Activated CD4-positive, alpha-beta T cell treated with anti-CD3 and anti-CD28 coated beads for 36 hours (primary cell): ENCODE measurements at regions of chr14 and their contacts with region 1.

Region 1: DNA sequence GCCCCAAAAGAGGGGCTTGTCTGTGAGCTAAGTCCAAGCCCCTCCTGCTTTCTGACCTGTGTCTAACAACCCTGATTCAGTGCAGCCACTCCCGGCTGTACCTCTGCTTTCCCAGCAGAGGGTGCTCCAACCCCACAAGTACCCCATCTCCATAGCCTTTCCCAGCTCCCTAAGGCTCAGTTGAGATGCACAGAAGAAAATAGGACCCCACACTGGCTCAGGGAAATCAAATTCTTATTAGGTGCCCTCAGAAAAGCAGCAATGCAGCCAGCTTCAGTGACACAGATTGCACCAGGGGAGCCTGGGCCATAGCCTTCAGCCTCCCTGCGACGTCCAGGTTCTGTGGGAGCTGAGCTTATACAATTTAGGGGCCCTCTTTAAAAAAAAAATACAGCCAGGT is 49.9 kb downstream of the LRRC74A start:
- DNase-seq: peak; percentile 69
- ATAC-seq: peak; percentile 89
- H3K4me3 Mint-ChIP-seq: no peak overlapping the region
- H3K27ac Mint-ChIP-seq: no peak overlapping the region
- H3K4me1 Mint-ChIP-seq: no peaks in the 10 kb centered on the region
- H3K27me3 Mint-ChIP-seq: no peaks in the 10 kb centered on the region

Region 2: GRCh38 chr14:76761136-76761959 is 114.7 kb before region 1 on chr14 and contains the start of gene VASH1:
- CTCF ChIA-PET with region 1: no interaction called
- POLR2A ChIA-PET with region 1: no interaction called
- intact Hi-C with region 1: no loop called
- DNase-seq: peak; percentile 78
- ATAC-seq: peak; percentile 89
- H3K4me3 Mint-ChIP-seq: peak within 1 kb of the TSS; percentile 73
- H3K27ac Mint-ChIP-seq: peak within 1 kb of the TSS; percentile 11
- H3K4me1 Mint-ChIP-seq: peaks cover 8% of the 10 kb centered on the region
- H3K27me3 Mint-ChIP-seq: peaks cover 27% of the 10 kb centered on the region
- total RNA-seq, gene VASH1: 4.0 to 5.3 TPM

Region 3: DNA sequence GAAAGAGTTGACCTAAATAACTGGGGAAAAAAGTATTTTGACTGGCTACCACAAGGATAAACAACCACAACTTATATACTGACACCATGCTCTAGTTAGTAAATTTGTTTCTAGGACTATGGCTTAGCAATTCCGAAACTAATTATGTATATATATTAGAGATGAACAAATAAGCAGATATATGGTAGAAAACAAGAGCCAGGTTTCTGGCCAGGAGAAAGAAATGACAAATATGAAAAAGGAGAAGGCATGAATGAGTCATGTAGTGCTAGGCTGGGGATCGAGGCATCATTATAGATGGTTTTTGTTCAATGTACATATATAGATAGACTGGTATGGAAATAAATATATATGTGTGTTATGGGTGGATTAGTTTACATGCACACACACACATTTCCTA is 55.4 kb before region 1 on chr14:
- CTCF ChIA-PET with region 1: no interaction called
- POLR2A ChIA-PET with region 1: no interaction called
- intact Hi-C with region 1: no loop called
- DNase-seq: no peak
- ATAC-seq: peak; percentile 30
- H3K4me3 Mint-ChIP-seq: no peak overlapping the region
- H3K27ac Mint-ChIP-seq: no peak overlapping the region
- H3K4me1 Mint-ChIP-seq: no peaks in the 10 kb centered on the region
- H3K27me3 Mint-ChIP-seq: peaks cover 4% of the 10 kb centered on the region

Region 4: DNA sequence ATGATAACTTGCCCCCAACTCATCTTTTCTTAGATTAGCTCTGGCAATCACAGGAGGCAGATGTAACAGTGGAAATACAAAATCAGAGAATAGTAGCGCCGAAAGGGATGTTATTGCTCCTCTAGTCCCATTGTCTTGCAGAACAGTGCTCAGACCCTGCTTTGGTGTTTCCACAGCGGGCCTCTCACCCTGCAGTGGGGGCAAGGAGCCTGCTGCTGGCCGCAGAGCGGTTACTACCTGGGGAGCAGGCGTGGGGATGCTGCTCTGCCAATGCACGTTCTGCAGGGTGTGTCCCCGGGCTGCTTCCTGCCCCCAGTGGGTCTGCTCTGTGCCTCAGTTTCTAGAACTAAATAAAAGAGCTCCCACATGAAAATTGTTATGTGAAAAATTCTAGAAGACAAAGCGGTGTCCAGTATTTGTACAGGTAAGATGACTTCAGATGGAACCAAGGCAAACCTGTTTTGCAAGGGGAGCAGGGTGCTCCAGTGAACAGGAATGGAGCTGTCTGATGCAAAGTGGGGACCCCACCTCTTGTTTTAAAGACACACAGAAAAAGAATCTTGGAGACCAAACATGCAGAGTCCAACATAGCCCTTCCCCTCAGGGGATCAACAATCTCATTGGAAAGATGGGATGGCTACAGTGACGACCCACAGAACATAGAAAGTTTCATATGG is 14.4 kb before region 1 on chr14:
- CTCF ChIA-PET with region 1: interaction called, 14 read pairs
- POLR2A ChIA-PET with region 1: no interaction called
- intact Hi-C with region 1: no loop called
- DNase-seq: no peak
- ATAC-seq: no peak
- H3K4me3 Mint-ChIP-seq: no peak overlapping the region
- H3K27ac Mint-ChIP-seq: no peak overlapping the region
- H3K4me1 Mint-ChIP-seq: peaks cover 26% of the 10 kb centered on the region
- H3K27me3 Mint-ChIP-seq: peaks cover 5% of the 10 kb centered on the region

Region 5: GRCh38 chr14:76904740-76905438 is 28.8 kb after region 1 on chr14:
- CTCF ChIA-PET with region 1: interaction called, 19 read pairs
- POLR2A ChIA-PET with region 1: no interaction called
- intact Hi-C with region 1: loop called in 1 of 2 experiments (anchors 5 kb)
- DNase-seq: peak; percentile 94
- ATAC-seq: peak; percentile 97
- H3K4me3 Mint-ChIP-seq: no peak overlapping the region
- H3K27ac Mint-ChIP-seq: peak overlapping the region; percentile 80
- H3K4me1 Mint-ChIP-seq: peaks cover 31% of the 10 kb centered on the region
- H3K27me3 Mint-ChIP-seq: no peaks in the 10 kb centered on the region

Region 6: GRCh38 chr14:76918751-76919543 is 42.9 kb after region 1 on chr14:
- CTCF ChIA-PET with region 1: interaction called, 18 read pairs
- POLR2A ChIA-PET with region 1: no interaction called
- intact Hi-C with region 1: loop called in 1 of 2 experiments (anchors 5 kb)
- DNase-seq: peak; percentile 65
- ATAC-seq: no peak
- H3K4me3 Mint-ChIP-seq: no peak overlapping the region
- H3K27ac Mint-ChIP-seq: no peak overlapping the region
- H3K4me1 Mint-ChIP-seq: peaks cover 59% of the 10 kb centered on the region
- H3K27me3 Mint-ChIP-seq: no peaks in the 10 kb centered on the region

Region 7: GRCh38 chr14:77053046-77053841 is 177.2 kb after region 1 on chr14:
- CTCF ChIA-PET with region 1: interaction called, 25 read pairs
- POLR2A ChIA-PET with region 1: no interaction called
- intact Hi-C with region 1: loop called (anchors 1 kb)
- DNase-seq: peak; percentile 90
- ATAC-seq: peak; percentile 86
- H3K4me3 Mint-ChIP-seq: no peak overlapping the region
- H3K27ac Mint-ChIP-seq: peak overlapping the region; percentile 78
- H3K4me1 Mint-ChIP-seq: peaks cover 18% of the 10 kb centered on the region
- H3K27me3 Mint-ChIP-seq: no peaks in the 10 kb centered on the region

Region 8: GRCh38 chr14:77067632-77068514 is 191.8 kb after region 1 on chr14:
- CTCF ChIA-PET with region 1: interaction called, 599 read pairs
- POLR2A ChIA-PET with region 1: no interaction called
- intact Hi-C with region 1: loop called (anchors 1 kb)
- DNase-seq: peak; percentile 80
- ATAC-seq: peak; percentile 74
- H3K4me3 Mint-ChIP-seq: no peak overlapping the region
- H3K27ac Mint-ChIP-seq: no peak overlapping the region
- H3K4me1 Mint-ChIP-seq: no peaks in the 10 kb centered on the region
- H3K27me3 Mint-ChIP-seq: no peaks in the 10 kb centered on the region